ENCODE measurements at regions of chr6 and their contacts with region 1.

Region 1: DNA sequence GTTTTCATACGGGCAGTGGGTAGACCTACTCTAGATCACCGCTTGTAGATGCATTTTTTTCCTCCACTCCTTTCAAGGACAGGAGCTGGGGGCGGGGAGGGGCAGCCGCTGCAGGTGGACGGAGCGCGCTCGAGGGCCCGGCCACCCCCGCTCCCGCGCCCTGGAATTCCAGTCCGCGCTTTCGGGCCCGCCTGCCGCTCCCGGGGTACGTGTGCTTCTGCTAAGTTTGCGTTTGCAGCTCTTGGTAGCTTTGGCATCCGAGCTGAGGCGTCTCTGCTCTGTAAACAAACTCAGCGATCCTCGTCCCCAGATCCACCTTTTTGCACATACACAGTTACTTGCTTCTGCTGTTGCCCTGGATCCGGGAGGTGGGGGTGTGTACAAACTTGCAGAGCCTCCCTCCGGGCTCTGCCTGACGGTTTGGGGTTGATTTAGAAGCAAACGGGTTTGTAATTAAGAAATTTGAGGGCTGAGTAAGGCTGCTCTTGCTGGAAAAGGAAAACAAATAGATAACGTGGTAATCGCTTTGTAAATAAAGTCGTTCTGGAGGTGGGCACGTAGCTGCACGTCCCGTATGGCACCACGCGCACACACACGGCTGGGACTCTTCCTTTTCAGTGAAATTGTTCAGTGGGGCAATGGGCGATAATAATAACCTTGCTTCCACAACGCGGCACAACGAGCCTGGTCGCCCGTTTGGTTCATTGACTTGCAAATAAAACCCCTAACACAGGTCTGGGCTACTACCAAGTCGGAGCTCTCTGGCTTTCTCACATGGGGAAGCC is 976 bp upstream of the CITED2 start:
- DNase-seq: peak; percentile 53 to 92 (median 85)

Region 2: GRCh38 chr6:139134817-139135581 is 240.4 kb before region 1 on chr6 and contains the start of gene HECA:
- intact Hi-C with region 1: loop called (anchors 10 kb)
- DNase-seq: peak; percentile 93 to 98 (median 96)

Region 3: DNA sequence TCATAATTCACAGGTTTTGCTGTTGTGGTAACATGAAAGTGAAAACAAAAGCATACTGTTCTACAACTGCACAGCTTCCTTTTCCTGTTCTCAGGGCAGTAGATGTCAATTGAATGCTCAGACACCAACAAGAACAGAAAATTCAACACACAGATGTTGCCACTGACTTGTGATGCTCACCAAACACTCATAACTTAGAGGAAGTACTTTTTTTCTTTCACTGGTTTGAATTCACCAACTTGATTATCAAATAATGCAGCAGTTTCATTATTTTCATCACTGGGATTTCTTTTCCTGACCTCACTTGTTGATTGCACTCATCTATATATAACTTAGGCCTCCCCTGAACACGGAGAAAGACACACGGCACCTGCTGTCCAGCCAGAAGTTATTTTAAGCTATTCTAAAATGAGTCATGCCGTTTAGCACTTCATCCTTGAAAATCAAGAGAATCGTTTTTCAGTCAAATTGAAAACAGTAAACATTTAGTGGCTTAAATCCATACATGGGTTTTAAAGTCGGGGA is 84.6 kb before region 1 on chr6:
- intact Hi-C with region 1: no loop called
- DNase-seq: peak in 1 of 42 donors; percentile 11

Measured in head of caudate nucleus (tissue), 42 donors.